ENCODE measurements at regions of chr12 and their contacts with region 1.

Region 1: DNA sequence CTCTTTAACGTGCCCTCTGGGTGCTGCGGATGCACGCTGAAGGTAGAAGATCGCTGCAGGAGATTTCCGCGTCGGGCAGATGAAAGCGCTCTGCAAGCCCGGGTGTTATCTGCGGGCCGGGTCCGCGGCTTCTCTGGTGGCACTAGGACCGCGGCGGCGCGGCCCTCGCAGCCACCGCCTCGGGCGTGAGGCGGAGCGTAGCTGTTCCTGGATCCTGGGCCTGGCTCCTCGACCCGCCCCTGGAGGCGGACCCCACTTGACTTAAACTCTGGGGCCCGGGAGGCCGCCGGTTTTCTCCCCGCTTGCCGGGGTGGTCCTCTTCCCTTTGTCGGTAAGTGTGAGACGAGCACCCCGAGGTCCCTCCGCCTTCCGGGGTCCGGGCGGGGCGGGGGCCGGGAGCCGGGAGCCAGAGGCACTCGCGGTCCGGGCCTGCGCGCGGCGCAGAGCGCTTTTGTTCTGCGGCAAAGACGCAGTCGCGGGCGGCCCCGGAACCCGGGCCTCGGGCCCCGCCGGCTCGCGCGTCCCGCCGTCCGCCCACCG is at the start of gene RESF1:
- DNase-seq: peak; percentile 94
- total RNA-seq, gene RESF1: 7.9 and 11.1 TPM in 2 replicates

Region 2: GRCh38 chr12:31728917-31729640 is 230.2 kb before region 1 on chr12 and contains the start of gene AMN1:
- in situ Hi-C with region 1: loop called (anchors 25 kb)
- DNase-seq: peak; percentile 100
- total RNA-seq, gene AMN1: 6.3 and 7.9 TPM in 2 replicates

Region 3: GRCh38 chr12:32051559-32052414 is 92.6 kb after region 1 on chr12:
- in situ Hi-C with region 1: loop called (anchors 10 kb)
- DNase-seq: peak; percentile 93

Measured in Caki2 (cell line).